ENCODE measurements at regions of chr1 and their contacts with region 1.

Region 1: GRCh38 chr1:6554031-6554906 is at the start of gene NOL9:
- DNase-seq: peak; percentile 92 to 95 (median 94)
- H3K4me3 ChIP-seq: peak within 1 kb of the TSS; percentile 71 to 80
- H3K4me3 Mint-ChIP-seq: peak within 1 kb of the TSS; percentile 77 to 85 (median 81)
- H3K27ac ChIP-seq: peak within 1 kb of the TSS; percentile 86
- H3K27ac Mint-ChIP-seq: peak within 1 kb of the TSS; percentile 35 to 88 (median 78)
- H3K4me1 ChIP-seq: peaks cover 21% of the 10 kb centered on the region
- H3K4me1 Mint-ChIP-seq: peaks cover 2 to 20% (median 12%) of the 10 kb centered on the region in 4 donors
- H3K27me3 ChIP-seq: no peaks in the 10 kb centered on the region
- H3K27me3 Mint-ChIP-seq: no peaks in the 10 kb centered on the region
- total RNA-seq, gene NOL9: 59.9 to 60.9 TPM

Region 2: GRCh38 chr1:6423321-6423999 is 130.8 kb before region 1 on chr1:
- CTCF ChIA-PET with region 1: no interaction called
- POLR2A ChIA-PET with region 1: no interaction called
- intact Hi-C with region 1: loop called (anchors 1 kb)
- DNase-seq: peak; percentile 64 to 74 (median 69)
- H3K4me3 ChIP-seq: peak overlapping the region in 1 of 2 donors; percentile 38
- H3K4me3 Mint-ChIP-seq: peak overlapping the region; percentile 46 to 76 (median 68)
- H3K27ac ChIP-seq: no peak overlapping the region
- H3K27ac Mint-ChIP-seq: no peak overlapping the region
- H3K4me1 ChIP-seq: peaks cover 35% of the 10 kb centered on the region
- H3K4me1 Mint-ChIP-seq: peaks cover 6 to 35% (median 19%) of the 10 kb centered on the region in 4 donors
- H3K27me3 ChIP-seq: peaks cover 37% of the 10 kb centered on the region
- H3K27me3 Mint-ChIP-seq: peaks cover 22 to 24% of the 10 kb centered on the region in 2 donors

Region 3: DNA sequence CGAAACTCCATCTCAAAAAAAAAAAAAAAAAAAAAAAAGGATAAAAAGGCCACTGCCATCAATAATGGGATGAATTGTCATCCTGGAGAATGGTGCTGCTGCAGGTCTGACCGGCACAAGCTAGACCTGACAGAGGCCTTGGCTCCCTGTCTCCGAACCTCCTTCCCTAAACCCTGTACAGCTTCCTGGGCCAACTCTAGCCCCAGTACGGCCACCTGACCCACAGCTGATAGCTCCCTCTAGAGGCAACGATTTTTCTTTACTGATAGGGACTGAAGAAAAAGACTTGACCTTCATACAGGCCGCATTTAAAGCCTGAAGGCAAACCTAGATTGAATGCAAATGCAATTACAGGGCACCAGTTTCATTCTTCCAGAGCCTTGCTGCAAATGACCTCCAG is 30.7 kb before region 1 on chr1:
- CTCF ChIA-PET with region 1: interaction called, 34 read pairs
- POLR2A ChIA-PET with region 1: interaction called, 5 read pairs
- intact Hi-C with region 1: no loop called
- DNase-seq: no peak
- H3K4me3 ChIP-seq: no peak overlapping the region
- H3K4me3 Mint-ChIP-seq: no peak overlapping the region
- H3K27ac ChIP-seq: no peak overlapping the region
- H3K27ac Mint-ChIP-seq: peak overlapping the region in 4 of 7 donors; percentile 11 to 52 (median 38)
- H3K4me1 ChIP-seq: no peaks in the 10 kb centered on the region
- H3K4me1 Mint-ChIP-seq: peaks cover 0 to 4% (median 2%) of the 10 kb centered on the region in 4 donors
- H3K27me3 ChIP-seq: no peaks in the 10 kb centered on the region
- H3K27me3 Mint-ChIP-seq: no peaks in the 10 kb centered on the region

Region 4: DNA sequence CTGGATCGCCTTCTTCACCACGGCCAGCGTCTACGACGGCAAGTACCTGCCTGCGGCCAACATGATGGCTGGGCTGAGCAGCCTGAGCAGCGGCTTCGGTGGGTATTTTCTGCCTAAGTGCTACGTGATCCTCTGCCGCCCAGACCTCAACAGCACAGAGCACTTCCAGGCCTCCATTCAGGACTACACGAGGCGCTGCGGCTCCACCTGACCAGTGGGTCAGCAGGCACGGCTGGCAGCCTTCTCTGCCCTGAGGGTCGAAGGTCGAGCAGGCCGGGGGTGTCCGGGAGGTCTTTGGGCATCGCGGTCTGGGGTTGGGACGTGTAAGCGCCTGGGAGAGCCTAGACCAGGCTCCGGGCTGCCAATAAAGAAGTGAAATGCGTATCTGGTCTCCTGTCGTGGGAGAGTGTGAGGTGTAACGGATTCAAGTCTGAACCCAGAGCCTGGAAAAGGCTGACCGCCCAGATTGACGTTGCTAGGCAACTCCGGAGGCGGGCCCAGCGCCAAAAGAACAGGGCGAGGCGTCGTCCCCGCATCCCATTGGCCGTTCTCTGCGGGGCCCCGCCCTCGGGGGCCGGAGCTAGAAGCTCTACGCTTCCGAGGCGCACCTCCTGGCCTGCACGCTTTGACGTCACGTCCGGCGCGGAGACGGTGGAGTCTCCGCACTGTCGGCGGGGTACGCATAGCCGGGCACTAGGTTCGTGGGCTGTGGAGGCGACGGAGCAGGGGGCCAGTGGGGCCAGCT is 25.3 kb after region 1 on chr1 and contains the start of gene ZBTB48:
- CTCF ChIA-PET with region 1: interaction called, 11 read pairs
- POLR2A ChIA-PET with region 1: interaction called, 22 read pairs
- intact Hi-C with region 1: loop called (anchors 1 kb)
- DNase-seq: peak; percentile 95 to 97 (median 95)
- H3K4me3 ChIP-seq: peak within 1 kb of the TSS; percentile 69 to 76
- H3K4me3 Mint-ChIP-seq: peak within 1 kb of the TSS; percentile 92 to 99 (median 96)
- H3K27ac ChIP-seq: peak within 1 kb of the TSS; percentile 83
- H3K27ac Mint-ChIP-seq: peak within 1 kb of the TSS; percentile 96 to 99 (median 99)
- H3K4me1 ChIP-seq: peaks cover 32% of the 10 kb centered on the region
- H3K4me1 Mint-ChIP-seq: peaks cover 19 to 42% (median 30%) of the 10 kb centered on the region in 4 donors
- H3K27me3 ChIP-seq: no peaks in the 10 kb centered on the region
- H3K27me3 Mint-ChIP-seq: no peaks in the 10 kb centered on the region
- total RNA-seq, gene ZBTB48: 62.6 to 70.7 TPM

Region 5: DNA sequence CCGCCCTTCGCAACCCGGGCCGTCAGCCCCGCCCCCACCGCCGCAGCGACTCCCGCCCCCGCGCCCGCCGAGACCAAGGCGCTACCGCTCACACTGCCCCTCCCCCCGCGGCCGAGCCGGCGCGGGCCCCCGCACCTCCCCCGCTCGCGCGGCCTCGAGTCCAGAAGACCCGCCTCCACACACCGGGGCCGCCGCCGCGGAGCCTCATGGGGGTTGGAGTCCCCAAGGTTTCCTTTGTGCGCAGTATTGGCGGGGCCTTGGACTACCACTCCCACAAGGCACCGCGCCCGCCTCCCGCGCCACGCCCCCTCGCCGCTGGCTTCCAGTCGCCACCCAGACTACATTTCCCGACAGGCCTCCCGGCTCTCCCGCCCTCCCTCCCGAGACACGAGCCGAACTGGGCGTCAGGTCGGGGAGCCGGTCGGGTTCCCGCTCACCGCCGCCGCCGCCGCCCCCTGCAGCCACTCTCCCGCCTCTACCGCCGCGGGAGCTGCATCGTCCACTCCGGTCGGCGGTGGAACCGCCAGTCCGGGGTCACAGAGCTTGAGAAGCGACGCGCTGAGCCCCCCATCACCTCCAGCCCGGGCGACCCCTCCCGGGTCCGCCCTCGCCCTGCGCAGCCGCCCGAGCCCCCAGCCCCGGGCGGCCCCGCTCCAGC is 59.2 kb after region 1 on chr1 and contains the start of gene PHF13:
- CTCF ChIA-PET with region 1: interaction called, 5 read pairs
- POLR2A ChIA-PET with region 1: interaction called, 7 read pairs
- intact Hi-C with region 1: loop called (anchors 1 kb)
- DNase-seq: peak; percentile 98 to 99 (median 99)
- H3K4me3 ChIP-seq: peak within 1 kb of the TSS; percentile 20 to 46
- H3K4me3 Mint-ChIP-seq: peak within 1 kb of the TSS; percentile 91 to 97 (median 93)
- H3K27ac ChIP-seq: peak within 1 kb of the TSS; percentile 65
- H3K27ac Mint-ChIP-seq: peak within 1 kb of the TSS; percentile 86 to 94 (median 92)
- H3K4me1 ChIP-seq: peaks cover 23% of the 10 kb centered on the region
- H3K4me1 Mint-ChIP-seq: peaks cover 15 to 31% (median 25%) of the 10 kb centered on the region in 4 donors
- H3K27me3 ChIP-seq: no peaks in the 10 kb centered on the region
- H3K27me3 Mint-ChIP-seq: no peaks in the 10 kb centered on the region
- total RNA-seq, gene PHF13: 13.1 to 14.7 TPM

Region 6: GRCh38 chr1:6646499-6647148 is 92.4 kb after region 1 on chr1:
- CTCF ChIA-PET with region 1: interaction called, 42 read pairs
- POLR2A ChIA-PET with region 1: interaction called, 3 read pairs
- intact Hi-C with region 1: loop called (anchors 1 kb)
- DNase-seq: peak in 4 of 5 donors; percentile 53 to 59 (median 56)
- H3K4me3 ChIP-seq: no peak overlapping the region
- H3K4me3 Mint-ChIP-seq: no peak overlapping the region
- H3K27ac ChIP-seq: no peak overlapping the region
- H3K27ac Mint-ChIP-seq: peak overlapping the region in 2 of 7 donors; percentile 10 to 19
- H3K4me1 ChIP-seq: peaks cover 6% of the 10 kb centered on the region
- H3K4me1 Mint-ChIP-seq: peaks cover 0 to 5% (median 3%) of the 10 kb centered on the region in 4 donors
- H3K27me3 ChIP-seq: no peaks in the 10 kb centered on the region
- H3K27me3 Mint-ChIP-seq: no peaks in the 10 kb centered on the region